Transverse colon (tissue), 4 donors: ENCODE measurements at regions of chr6 and their contacts with region 1.

Region 1: DNA sequence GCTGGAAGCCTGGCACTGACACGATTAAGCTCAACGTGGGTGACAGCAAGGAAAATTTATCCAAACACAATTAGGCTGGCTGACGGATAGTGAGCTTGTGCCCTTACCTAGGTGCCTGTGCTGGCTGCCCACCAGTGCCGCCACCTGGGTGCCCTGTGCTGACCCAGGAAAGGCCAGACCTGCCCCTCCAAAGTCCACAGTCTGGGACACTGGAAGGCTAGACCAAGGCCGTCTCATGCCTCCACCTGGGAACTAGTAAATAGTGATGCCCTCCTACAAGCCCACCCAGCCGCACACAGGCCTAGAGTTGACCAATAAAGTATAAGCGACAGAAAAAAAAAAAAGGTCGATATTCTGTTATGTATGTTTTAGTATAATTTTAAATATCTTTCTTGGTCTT is 142.6 kb upstream of the MCHR2 start:
- DNase-seq: no peak
- H3K4me3 ChIP-seq: no peak overlapping the region
- H3K27ac ChIP-seq: no peak overlapping the region
- H3K4me1 ChIP-seq: no peaks in the 10 kb centered on the region
- H3K27me3 ChIP-seq: no peaks in the 10 kb centered on the region
- CTCF ChIP-seq: no peak
- EP300 ChIP-seq: no peak
- POLR2A ChIP-seq: no peak

Region 2: DNA sequence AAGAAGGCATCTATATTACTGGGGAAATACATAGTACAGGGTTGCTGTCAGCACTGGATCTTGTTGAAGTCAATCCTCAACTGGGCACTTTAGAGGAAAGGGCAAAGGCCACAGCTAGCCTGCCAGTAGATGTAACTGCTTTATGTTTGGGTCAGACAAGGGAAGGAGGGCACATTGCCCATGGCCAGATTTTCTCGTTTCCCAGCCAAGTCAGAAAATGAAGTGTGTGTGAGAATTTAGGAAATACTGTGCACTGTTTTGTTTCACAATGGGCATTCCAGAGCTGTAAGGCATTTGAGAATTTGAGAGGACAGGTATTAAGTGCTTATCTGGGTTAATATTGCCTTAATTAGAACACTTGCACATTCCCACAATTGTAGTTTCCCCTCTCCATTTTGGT is 41.4 kb after region 1 on chr6:
- in situ Hi-C with region 1: no loop called
- intact Hi-C with region 1: loop called (anchors 2 kb)
- DNase-seq: no peak
- H3K4me3 ChIP-seq: no peak overlapping the region
- H3K27ac ChIP-seq: no peak overlapping the region
- H3K4me1 ChIP-seq: no peaks in the 10 kb centered on the region
- H3K27me3 ChIP-seq: no peaks in the 10 kb centered on the region
- CTCF ChIP-seq: no peak
- EP300 ChIP-seq: no peak
- POLR2A ChIP-seq: no peak

Region 3: DNA sequence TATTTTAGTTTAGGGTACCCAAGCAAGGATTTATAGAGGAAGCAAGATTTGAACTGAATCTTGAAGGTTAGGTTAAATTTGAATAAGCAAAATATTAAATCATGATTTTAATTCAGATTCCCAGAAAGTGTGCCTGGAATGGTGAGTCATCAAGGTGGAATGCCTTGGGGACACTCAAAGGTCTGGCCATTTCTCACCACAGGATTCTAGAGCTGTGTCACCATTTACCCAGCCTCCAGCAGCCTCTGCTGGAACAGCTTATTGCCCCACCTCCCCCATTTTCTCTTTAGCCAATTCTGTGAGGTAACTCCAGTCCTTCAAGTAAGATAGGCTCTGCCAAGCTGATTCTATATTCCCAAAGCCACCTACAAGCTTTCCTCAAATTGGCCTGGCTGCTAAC is 146.7 kb after region 1 on chr6:
- in situ Hi-C with region 1: no loop called
- intact Hi-C with region 1: no loop called
- DNase-seq: no peak
- H3K4me3 ChIP-seq: no peak overlapping the region
- H3K27ac ChIP-seq: no peak overlapping the region
- H3K4me1 ChIP-seq: no peaks in the 10 kb centered on the region
- H3K27me3 ChIP-seq: no peaks in the 10 kb centered on the region
- CTCF ChIP-seq: no peak
- EP300 ChIP-seq: no peak
- POLR2A ChIP-seq: no peak

Region 4: DNA sequence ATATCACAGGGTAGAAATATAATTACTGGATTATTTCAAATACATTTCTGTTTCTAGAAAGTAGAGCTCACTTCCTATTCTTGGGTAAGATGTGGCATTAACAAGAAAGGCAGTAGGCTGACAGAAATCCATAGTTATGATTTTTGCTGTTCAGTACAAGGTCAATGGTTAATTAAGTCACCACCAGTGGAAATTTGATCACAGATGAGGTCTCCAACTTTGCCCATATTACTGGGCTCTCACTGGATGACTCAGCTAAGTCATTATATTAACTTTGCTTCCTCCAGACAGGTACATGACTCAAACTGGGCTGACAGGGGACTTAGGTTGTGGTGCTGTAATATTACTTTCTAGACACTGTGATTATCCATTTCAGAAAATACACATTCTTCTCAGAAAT is 1469.3 kb after region 1 on chr6:
- in situ Hi-C with region 1: no loop called
- intact Hi-C with region 1: no loop called
- DNase-seq: no peak
- H3K4me3 ChIP-seq: no peak overlapping the region
- H3K27ac ChIP-seq: no peak overlapping the region
- H3K4me1 ChIP-seq: peaks cover 0 to 7% (median 0%) of the 10 kb centered on the region in 4 donors
- H3K27me3 ChIP-seq: no peaks in the 10 kb centered on the region
- CTCF ChIP-seq: no peak
- EP300 ChIP-seq: no peak
- POLR2A ChIP-seq: no peak